ENCODE measurements at regions of chr1 and their contacts with region 1.

Region 1: GRCh38 chr1:226121587-226122400 is 59.3 kb downstream of the H3-3A start:
- DNase-seq: peak; percentile 88

Region 2: DNA sequence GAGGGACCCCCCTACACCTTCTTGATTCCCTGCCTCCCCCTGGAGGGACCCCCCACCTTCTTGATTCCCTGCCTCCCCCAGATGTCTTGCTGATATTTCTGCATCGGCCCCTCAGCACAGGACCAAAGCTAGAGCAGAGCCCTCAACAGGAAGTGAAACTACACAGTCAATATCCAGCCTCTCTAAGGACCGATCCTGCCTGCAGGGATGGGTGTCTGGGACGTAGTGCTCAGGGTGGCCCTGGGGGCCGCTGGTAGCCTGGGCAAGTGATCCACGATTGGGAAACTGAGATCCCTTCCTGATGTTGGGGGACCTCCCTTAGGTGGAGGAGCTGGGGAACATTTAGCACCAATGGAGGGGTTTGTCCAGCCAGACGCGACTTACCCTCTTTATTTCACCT is 176.8 kb before region 1 on chr1:
- intact Hi-C with region 1: no loop called
- DNase-seq: peak; percentile 30

Region 3: GRCh38 chr1:226195144-226195543 is 73.3 kb after region 1 on chr1:
- intact Hi-C with region 1: loop called (anchors 5 kb)
- DNase-seq: no peak

Measured in posterior vena cava (tissue), 2 donors.